ENCODE measurements at regions of chr5 and their contacts with region 1.

Region 1: GRCh38 chr5:72018146-72018803 is 89.0 kb upstream of the MAP1B start:
- DNase-seq: peak; percentile 68
- CTCF ChIP-seq: peak; percentile 92

Region 2: GRCh38 chr5:71864730-71865601 is 153.3 kb before region 1 on chr5:
- CTCF ChIA-PET with region 1: no interaction called
- POLR2A ChIA-PET with region 1: no interaction called
- DNase-seq: no peak
- CTCF ChIP-seq: no peak

Region 3: GRCh38 chr5:71949778-71950177 is 68.5 kb before region 1 on chr5:
- CTCF ChIA-PET with region 1: no interaction called
- POLR2A ChIA-PET with region 1: no interaction called
- DNase-seq: no peak
- CTCF ChIP-seq: no peak

Region 4: GRCh38 chr5:72005671-72006070 is 12.6 kb before region 1 on chr5:
- CTCF ChIA-PET with region 1: interaction called, 17 read pairs
- POLR2A ChIA-PET with region 1: no interaction called
- DNase-seq: no peak
- CTCF ChIP-seq: no peak

Region 5: GRCh38 chr5:72030237-72030636 is 12.0 kb after region 1 on chr5:
- CTCF ChIA-PET with region 1: interaction called, 11 read pairs
- POLR2A ChIA-PET with region 1: no interaction called
- DNase-seq: no peak
- CTCF ChIP-seq: no peak